Activated CD8-positive, alpha-beta memory T cell treated with anti-CD3 and anti-CD28 coated beads, Interleukin-2, amount 10 ng/mL, durations not matched to agents 7 days and 5 days (primary cell): ENCODE measurements at regions of chr19 and their contacts with region 1.

Region 1: DNA sequence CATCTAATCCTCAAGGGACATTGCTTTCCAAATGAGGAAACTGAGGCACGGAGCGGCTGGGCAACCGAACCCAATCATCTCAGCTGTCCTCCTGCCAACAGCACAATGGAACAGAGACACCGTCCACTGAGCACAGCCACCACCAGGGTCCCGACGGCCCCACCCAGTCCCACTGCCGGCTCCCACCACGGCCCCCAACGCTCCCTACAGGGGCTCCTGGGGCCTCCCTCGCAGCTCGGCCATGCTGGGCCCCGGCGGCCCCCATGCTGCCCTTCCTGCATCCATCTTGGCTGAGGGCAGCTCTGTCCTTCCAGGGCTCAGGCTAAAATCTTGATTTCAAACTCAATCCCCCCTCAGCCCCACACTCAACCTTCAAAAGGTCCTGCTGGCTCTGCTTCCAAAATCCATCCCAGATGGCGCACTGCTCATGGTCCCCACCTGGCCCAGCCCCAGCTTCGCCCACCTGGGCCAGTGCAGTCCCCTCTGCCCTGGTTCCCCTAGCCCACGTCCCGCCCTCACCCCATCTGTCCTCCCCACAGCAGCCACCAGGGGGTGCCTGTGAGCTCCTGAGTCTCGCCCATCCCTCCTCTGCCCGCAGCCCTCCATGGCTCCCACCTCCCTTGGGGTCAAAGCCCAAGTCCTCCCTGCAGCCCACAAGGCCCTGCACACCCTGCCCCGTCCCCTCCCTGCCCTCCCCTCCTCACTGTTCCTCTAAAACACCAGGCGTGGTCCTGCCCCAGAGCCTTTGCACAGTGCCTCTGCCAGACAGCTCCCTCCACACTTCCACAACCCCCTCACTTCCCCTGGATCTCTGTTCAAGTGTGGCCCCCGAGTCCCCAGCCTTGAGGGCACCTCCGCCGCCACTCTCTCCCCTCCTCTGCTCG is 7.9 kb downstream of the PIP5K1C start:
- DNase-seq: no peak
- ATAC-seq: peak; percentile 21
- H3K4me3 Mint-ChIP-seq: no peak overlapping the region
- H3K27ac Mint-ChIP-seq: no peak overlapping the region
- H3K4me1 Mint-ChIP-seq: peaks cover 43% of the 10 kb centered on the region
- H3K27me3 Mint-ChIP-seq: no peaks in the 10 kb centered on the region

Region 2: GRCh38 chr19:3533033-3533432 is 159.3 kb before region 1 on chr19:
- CTCF ChIA-PET with region 1: no interaction called
- DNase-seq: no peak
- ATAC-seq: no peak
- H3K4me3 Mint-ChIP-seq: no peak overlapping the region
- H3K27ac Mint-ChIP-seq: no peak overlapping the region
- H3K4me1 Mint-ChIP-seq: no peaks in the 10 kb centered on the region
- H3K27me3 Mint-ChIP-seq: no peaks in the 10 kb centered on the region

Region 3: GRCh38 chr19:3642987-3643673 is 49.3 kb before region 1 on chr19:
- CTCF ChIA-PET with region 1: no interaction called
- DNase-seq: peak; percentile 52
- ATAC-seq: peak; percentile 38
- H3K4me3 Mint-ChIP-seq: no peak overlapping the region
- H3K27ac Mint-ChIP-seq: no peak overlapping the region
- H3K4me1 Mint-ChIP-seq: no peaks in the 10 kb centered on the region
- H3K27me3 Mint-ChIP-seq: no peaks in the 10 kb centered on the region

Region 4: DNA sequence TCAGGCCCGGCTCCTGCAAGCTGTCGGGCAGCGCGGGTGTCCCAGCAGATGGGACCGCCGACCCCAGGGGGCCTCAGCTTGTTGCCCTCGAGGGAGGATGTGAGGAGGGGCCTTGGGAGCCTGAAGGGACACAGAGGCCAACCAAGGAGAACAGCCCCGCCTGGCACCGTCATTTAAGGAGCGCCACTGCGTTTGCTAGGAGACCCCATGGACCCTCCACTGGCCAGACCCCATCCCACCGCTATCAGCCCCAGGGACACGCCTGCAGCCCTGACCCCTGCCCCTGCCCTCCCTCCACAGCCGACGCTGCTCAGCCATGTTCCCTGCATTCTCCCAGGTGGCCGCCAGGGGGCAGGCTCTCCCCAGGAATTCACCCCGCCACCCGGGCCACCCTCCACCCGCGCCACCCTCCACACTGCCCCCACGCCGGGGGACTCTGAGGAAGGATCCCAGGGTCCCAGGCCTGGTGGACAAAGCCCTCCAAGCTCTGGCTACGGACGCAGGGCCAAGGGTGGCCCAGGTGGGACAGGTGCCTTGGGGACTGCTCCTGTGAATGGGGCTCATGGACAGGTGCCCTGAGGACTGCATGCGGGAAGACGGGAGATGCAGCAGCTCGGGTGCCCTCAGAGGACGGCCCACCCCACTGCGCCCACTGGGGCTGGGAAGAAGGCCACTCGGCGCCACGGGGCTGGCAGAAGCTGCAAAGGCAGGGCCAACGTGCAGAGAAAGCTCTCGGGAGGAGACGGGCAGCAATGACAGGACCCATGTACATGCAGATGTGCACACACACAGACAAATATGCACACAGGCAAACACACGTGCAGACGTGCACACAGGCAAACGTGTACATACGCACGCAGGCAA is 26.5 kb before region 1 on chr19:
- CTCF ChIA-PET with region 1: interaction called, 19 read pairs
- DNase-seq: peak; percentile 80
- ATAC-seq: peak; percentile 83
- H3K4me3 Mint-ChIP-seq: no peak overlapping the region
- H3K27ac Mint-ChIP-seq: no peak overlapping the region
- H3K4me1 Mint-ChIP-seq: peaks cover 21% of the 10 kb centered on the region
- H3K27me3 Mint-ChIP-seq: no peaks in the 10 kb centered on the region

Region 5: DNA sequence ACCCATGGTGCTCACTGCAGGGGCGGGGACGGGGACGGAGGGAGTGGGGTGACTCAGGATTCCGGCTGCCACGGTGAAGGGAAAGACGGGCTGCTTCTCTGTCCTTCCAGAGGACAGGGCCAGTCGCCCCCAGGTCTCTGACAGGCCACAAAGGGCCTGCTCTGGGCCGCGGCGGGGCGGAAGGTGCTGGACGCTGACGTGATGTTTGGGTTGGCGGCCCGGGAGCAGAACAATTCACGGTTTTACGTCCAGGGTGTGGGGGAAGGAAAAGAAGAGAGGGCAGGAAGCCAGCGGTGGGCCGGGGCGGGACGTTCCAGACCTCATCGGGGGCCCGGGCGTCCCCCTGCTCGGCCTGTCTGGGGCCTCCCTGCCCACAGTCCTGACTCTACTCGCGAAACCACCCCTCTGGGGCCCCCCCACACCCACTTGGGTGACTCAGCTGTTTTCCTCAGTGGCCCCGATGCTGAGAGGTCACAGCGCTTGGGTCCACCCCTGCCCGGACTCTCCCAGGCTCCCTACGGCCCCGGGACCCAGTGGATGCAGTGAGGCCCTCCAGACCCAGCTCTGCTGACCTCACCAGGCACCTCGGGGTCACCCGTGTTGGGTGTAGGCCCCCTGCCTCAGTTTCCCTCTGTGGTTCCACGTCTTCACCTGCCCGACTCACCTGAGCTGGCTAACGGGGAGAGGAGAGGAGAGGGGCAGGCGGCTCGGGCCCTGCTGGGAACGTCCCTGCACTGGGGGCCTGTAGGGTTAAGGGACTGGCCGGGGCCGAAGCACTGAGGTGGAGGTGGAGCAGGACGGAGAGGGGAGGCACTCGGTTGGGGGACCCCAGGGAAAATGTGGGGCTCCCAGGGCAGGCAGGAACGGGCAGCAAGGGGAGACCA is 21.3 kb before region 1 on chr19:
- CTCF ChIA-PET with region 1: interaction called, 19 read pairs
- DNase-seq: peak; percentile 86
- ATAC-seq: peak; percentile 63
- H3K4me3 Mint-ChIP-seq: peak overlapping the region; percentile 59
- H3K27ac Mint-ChIP-seq: peak overlapping the region; percentile 86
- H3K4me1 Mint-ChIP-seq: peaks cover 37% of the 10 kb centered on the region
- H3K27me3 Mint-ChIP-seq: no peaks in the 10 kb centered on the region